Gastrocnemius medialis (tissue), 4 donors: ENCODE measurements at regions of chr17 and their contacts with region 1.

Region 1: DNA sequence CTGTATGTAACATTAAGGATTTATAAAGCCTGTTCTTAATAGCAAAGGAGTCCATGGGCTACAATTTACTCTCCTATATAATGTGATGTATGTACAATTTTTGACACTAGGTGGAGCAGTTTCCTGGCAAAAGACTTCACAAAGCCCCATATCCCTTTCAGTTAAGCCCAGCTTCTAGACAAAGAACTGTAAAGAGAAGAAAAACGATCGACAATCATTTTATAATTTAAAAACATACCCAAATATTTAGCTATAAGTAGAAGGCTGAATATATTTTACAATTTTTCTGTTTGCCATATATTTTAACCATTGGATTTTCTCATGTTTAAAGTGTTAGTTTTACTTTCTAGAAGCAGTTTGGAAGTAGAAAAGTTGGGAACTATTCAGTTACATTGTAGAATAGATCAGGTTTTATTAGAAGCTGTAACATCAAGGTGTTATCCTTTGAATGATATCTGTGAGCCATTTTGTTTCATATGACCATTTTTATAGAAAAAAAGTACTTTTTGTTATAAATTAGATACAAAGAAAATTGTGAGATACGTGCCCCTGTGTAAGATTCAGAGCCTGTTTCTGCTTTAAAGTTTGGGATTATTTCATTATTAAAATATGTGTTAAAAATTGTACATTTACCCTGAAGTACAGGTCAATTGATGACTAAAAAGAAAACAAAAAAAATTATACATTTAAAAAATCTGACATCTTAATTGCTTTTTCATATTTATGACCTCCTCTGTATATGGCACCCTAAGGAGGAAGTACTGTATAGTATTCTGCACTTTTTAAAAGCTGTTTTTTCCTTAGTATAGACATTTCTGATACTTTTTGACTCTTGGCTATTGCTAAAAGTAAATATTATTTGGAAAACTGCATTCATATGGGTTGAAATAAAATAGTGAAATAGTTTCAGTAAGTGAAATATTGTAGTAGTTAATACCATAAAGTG is 46.3 kb downstream of the VMP1 start:
- DNase-seq: peak in 1 of 2 donors; percentile 13
- ATAC-seq: peak; percentile 93 to 97
- H3K4me3 ChIP-seq: peak overlapping the region in 1 of 4 donors; percentile 6
- H3K27ac ChIP-seq: peak overlapping the region; percentile 19 to 49 (median 36)
- H3K4me1 ChIP-seq: peaks cover 6 to 8% of the 10 kb centered on the region in 2 donors
- H3K27me3 ChIP-seq: no peaks in the 10 kb centered on the region
- CTCF ChIP-seq: peak; percentile 60 to 81 (median 74)
- POLR2A ChIP-seq: no peak

Region 2: DNA sequence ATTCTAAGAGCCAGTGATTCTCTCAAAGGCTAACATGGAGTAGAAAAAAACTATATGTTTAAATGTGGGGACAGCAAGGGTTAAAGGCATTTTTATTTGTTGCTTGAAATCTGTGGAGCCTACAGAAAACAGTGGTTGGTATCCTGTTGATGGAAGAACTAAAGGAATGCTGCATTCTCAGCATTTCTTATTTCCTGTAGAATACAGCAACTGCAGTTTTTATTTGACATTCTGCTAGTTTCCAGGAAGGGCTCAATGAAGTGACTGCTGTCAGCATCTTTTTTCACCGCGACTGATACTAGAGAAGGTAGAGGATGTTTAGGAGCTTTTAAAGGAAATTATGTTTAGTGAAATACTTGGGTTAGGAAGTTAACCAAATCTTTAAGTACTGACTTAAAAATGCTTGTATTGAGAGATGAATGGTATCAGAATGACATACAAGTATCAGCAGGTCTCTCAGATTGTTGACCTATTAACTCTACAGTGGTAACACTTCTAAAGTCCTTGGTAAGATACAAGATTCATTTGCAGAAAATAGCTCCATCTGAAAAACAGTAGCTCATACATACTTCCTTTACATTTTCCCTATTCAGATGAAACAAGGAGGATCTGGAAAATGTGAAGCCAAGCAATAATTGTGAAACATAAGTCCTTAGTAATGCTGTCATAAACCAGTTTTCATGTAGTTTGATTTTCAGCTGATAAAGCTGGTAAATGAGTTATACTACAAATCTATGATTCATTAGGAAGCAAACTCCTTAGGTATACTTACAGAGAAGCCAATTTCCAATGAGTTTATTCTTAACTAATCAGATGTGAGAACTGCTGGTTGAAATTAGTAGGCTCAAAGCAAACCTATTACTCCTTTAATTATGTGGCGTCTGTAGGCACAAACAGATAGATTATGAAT is 118.9 kb before region 1 on chr17:
- in situ Hi-C with region 1: no loop called
- intact Hi-C with region 1: no loop called
- DNase-seq: no peak
- ATAC-seq: no peak
- H3K4me3 ChIP-seq: no peak overlapping the region
- H3K27ac ChIP-seq: peak overlapping the region in 1 of 4 donors; percentile 27
- H3K4me1 ChIP-seq: peaks cover 39 to 52% of the 10 kb centered on the region in 2 donors
- H3K27me3 ChIP-seq: no peaks in the 10 kb centered on the region
- CTCF ChIP-seq: no peak
- POLR2A ChIP-seq: no peak

Region 3: GRCh38 chr17:59837308-59838051 is 83.7 kb after region 1 on chr17:
- in situ Hi-C with region 1: no loop called
- intact Hi-C with region 1: loop called (anchors 2 kb)
- DNase-seq: peak; percentile 44 to 58
- ATAC-seq: peak; percentile 82 to 87
- H3K4me3 ChIP-seq: peak overlapping the region; percentile 47 to 58 (median 54)
- H3K27ac ChIP-seq: peak overlapping the region; percentile 70 to 99 (median 91)
- H3K4me1 ChIP-seq: peaks cover 10 to 33% of the 10 kb centered on the region in 2 donors
- H3K27me3 ChIP-seq: no peaks in the 10 kb centered on the region
- CTCF ChIP-seq: no peak
- POLR2A ChIP-seq: peak; percentile 47 to 81

Region 4: GRCh38 chr17:59859444-59860025 is 105.7 kb after region 1 on chr17:
- in situ Hi-C with region 1: no loop called
- intact Hi-C with region 1: loop called (anchors 2 kb)
- DNase-seq: no peak
- ATAC-seq: peak; percentile 48 to 75
- H3K4me3 ChIP-seq: no peak overlapping the region
- H3K27ac ChIP-seq: no peak overlapping the region
- H3K4me1 ChIP-seq: no peaks in the 10 kb centered on the region
- H3K27me3 ChIP-seq: no peaks in the 10 kb centered on the region
- CTCF ChIP-seq: peak; percentile 40 to 70 (median 54)
- POLR2A ChIP-seq: no peak

Region 5: DNA sequence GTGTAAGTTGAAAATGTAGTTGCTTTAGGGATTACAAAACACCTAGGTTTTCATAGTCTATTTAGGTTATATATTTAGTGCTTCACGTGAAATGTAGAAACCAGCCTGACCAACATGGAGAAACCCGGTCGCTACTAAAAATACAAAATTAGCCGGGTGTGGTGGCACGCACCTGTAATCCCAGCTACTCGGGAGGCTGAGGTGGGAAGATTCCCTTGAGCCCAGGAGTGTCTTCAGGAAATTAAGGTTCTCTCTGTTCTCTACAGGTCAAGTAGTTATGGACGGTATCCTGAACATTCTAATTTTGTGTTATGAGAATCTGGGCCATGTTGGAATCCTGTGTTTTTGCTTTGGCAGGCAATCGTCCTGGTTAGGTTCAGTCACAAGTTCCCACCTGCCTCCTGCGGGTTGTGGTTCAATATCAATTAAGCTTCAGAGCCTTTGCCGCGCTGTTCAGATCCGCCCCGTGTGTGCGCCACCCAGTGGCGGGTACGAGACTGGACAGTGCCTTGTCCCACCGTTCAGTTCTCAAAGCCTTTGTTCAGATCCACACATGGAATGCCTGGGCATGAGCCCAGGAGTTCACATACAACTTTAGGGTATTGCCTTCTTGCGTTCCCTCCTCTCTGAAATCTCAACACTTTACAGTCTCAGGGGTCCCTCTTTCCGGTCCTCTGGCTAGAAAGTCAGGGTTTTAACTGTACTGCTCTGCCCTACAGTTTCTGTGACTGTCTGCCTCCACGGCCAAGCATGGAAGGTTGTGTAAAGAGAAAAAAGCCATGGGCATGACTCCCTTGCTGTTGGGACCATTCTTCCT is 283.2 kb after region 1 on chr17:
- in situ Hi-C with region 1: no loop called
- intact Hi-C with region 1: loop called (anchors 5 kb)
- DNase-seq: peak; percentile 10 to 36
- ATAC-seq: peak; percentile 57 to 62
- H3K4me3 ChIP-seq: peak overlapping the region in 1 of 4 donors; percentile 31
- H3K27ac ChIP-seq: no peak overlapping the region
- H3K4me1 ChIP-seq: no peaks in the 10 kb centered on the region
- H3K27me3 ChIP-seq: peaks cover 0 to 8% (median 0%) of the 10 kb centered on the region in 3 donors
- CTCF ChIP-seq: peak; percentile 43 to 90 (median 64)
- POLR2A ChIP-seq: no peak